GM12878 (cell line): ENCODE measurements at regions of chr12 and their contacts with region 1.

Region 1: GRCh38 chr12:49130151-49131050 is 794 bp downstream of the TUBA1B start:
- DNase-seq: peak; percentile 90
- ATAC-seq: peak; percentile 77
- H3K4me3 ChIP-seq: peak overlapping the region; percentile 100
- H3K27ac ChIP-seq: peak overlapping the region; percentile 98
- H3K4me1 ChIP-seq: peaks cover 13% of the 10 kb centered on the region
- H3K27me3 ChIP-seq: no peaks in the 10 kb centered on the region
- CTCF ChIP-seq: peak; percentile 95 to 96 (median 95)
- EP300 ChIP-seq: peak in 1 of 2 experiments; percentile 24; a peak in 1 of 4 replicates
- POLR2A ChIP-seq: peak; percentile 84
- RAD21 ChIP-seq: peak; percentile 37; the same call in 1 of the 2 replicates

Region 2: DNA sequence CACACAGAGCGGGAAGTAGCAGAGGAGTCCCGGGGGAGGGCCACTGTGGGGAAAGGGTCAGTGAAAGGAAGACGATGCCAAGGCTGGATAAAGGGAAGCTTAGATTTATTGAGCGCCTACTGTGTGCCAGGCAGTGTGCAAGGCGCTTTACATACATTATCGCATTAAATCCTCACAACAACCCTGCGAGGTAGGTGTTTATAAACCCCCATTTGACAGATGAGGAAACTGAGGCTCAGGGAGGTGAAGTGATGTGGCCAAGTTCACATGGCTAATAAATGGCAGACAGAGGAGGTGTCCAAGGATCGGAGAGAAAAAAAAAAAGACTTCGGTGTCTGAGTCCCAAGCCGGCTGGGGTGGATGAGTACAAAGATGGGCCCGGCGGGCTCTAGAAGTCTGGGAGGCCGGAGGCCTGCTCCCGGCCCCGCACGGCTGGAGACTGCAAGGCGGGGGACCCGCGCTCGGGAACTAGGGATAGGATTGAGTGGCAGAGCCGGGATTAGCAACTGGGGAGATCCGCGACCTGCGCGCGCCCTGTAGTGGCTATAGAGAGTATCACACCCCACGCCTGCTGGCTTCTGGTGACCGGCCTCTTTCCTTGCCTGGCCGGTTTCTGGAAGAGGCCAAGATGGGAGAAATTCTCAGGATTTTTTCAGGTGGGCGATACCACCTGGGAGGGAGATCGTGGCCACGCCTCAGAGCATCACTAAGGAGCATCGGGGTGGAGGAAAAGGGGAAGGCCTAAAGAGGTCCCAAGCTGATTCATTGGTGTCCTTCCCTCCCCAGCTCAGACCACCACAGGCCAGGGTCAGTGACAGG is 135.1 kb before region 1 on chr12:
- CTCF ChIA-PET with region 1: interaction called, 9 read pairs
- POLR2A ChIA-PET with region 1: no interaction called
- RAD21 ChIA-PET with region 1: interaction called, 19 read pairs
- SMC1A ChIA-PET with region 1: no interaction called
- in situ Hi-C with region 1: no loop called
- intact Hi-C with region 1: no loop called
- DNase-seq: no peak
- ATAC-seq: peak; percentile 31
- H3K4me3 ChIP-seq: no peak overlapping the region
- H3K27ac ChIP-seq: no peak overlapping the region
- H3K4me1 ChIP-seq: peaks cover 29% of the 10 kb centered on the region
- H3K27me3 ChIP-seq: no peaks in the 10 kb centered on the region; a peak in 1 of 4 replicates
- CTCF ChIP-seq: peak; percentile 68 to 84 (median 82)
- EP300 ChIP-seq: no peak
- POLR2A ChIP-seq: no peak
- RAD21 ChIP-seq: peak; percentile 62

Region 3: DNA sequence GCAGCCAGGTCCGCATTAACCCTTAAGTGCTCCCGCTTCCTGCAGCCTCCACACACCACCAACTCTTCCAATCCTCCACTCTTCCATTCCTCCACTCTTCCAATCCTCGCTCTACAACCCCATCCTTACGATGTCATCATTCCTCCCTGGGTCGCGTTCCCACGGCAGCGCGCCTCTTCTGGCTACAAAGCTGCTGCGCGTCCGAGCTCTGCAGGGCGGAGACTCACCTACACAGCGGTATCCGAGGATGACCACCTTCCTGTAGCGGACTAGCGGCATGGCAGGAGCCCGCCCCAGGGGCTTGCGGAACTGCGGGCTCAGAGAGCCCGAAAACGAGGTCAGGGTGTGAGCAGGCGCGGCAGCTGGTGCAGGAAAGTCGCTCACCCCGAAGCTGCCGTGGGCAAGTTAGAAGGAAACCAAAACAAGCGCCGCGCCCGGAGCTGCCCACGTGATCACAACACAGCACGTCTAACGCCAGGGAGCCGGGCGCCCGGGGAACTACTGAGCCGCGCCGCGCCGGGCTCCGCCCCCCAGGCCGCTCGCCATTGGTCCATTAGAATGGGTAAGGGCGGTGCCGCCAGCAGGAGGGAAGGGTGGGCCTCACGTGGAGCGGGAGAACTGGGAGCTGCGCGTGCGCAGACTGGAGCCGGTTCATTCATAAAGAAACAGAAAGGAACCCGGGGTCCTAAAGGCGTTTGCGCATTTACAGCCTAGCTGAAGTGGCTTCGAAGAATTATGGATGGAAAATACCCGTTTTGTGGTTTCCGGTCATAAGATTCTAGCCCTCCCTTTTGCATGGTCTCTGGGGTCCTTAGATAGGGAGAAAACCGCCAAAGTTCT is 60.7 kb before region 1 on chr12 and contains the start of gene RHEBL1:
- CTCF ChIA-PET with region 1: interaction called, 35 read pairs
- POLR2A ChIA-PET with region 1: interaction called, 26 read pairs
- RAD21 ChIA-PET with region 1: interaction called, 28 read pairs
- SMC1A ChIA-PET with region 1: interaction called, 12 read pairs
- in situ Hi-C with region 1: no loop called
- intact Hi-C with region 1: loop called (anchors 1 kb)
- DNase-seq: peak; percentile 94
- ATAC-seq: peak; percentile 99
- H3K4me3 ChIP-seq: peak within 1 kb of the TSS; percentile 93
- H3K27ac ChIP-seq: peak within 1 kb of the TSS; percentile 91
- H3K4me1 ChIP-seq: peaks cover 4% of the 10 kb centered on the region
- H3K27me3 ChIP-seq: no peaks in the 10 kb centered on the region
- CTCF ChIP-seq: peak; percentile 33 to 37 (median 36); a peak in 4 of 6 replicates
- EP300 ChIP-seq: peak in 1 of 2 experiments; percentile 30; a peak in 1 of 4 replicates
- POLR2A ChIP-seq: peak; percentile 79
- RAD21 ChIP-seq: no peak
- polyA plus RNA-seq, gene RHEBL1: 17.9 to 18.7 TPM

Region 4: GRCh38 chr12:49098035-49098451 is 32.4 kb before region 1 on chr12:
- CTCF ChIA-PET with region 1: interaction called, 48 read pairs
- POLR2A ChIA-PET with region 1: interaction called, 11 read pairs
- RAD21 ChIA-PET with region 1: interaction called, 3 read pairs
- SMC1A ChIA-PET with region 1: interaction called, 4 read pairs
- in situ Hi-C with region 1: no loop called
- intact Hi-C with region 1: no loop called
- DNase-seq: no peak
- ATAC-seq: peak; percentile 80
- H3K4me3 ChIP-seq: no peak overlapping the region
- H3K27ac ChIP-seq: no peak overlapping the region
- H3K4me1 ChIP-seq: no peaks in the 10 kb centered on the region
- H3K27me3 ChIP-seq: peaks cover 6 to 10% of the 10 kb centered on the region in 2 experiments
- CTCF ChIP-seq: peak; percentile 76 to 89 (median 84)
- EP300 ChIP-seq: no peak
- POLR2A ChIP-seq: no peak
- RAD21 ChIP-seq: peak; percentile 55

Region 5: DNA sequence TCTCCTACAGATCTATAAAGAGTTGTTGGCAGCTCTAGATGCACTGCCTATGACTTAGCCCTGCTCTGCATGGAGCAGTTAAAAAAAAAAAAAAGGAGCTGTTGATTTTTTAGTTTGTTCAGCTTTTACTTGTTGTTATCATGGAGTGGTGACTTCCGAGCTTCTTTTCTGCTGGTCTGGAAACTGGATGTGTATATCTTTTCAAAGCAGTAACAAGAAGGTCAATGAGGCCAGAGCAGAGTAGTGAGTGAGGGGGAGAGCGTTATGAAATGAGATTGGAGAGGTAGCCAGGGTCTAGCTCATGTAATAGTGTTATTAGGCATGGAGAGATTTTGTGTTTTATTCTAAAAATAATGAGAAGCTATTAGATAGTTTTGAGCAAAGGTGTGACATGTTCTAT is 14.0 kb after region 1 on chr12:
- CTCF ChIA-PET with region 1: interaction called, 5 read pairs
- POLR2A ChIA-PET with region 1: interaction called, 15 read pairs
- RAD21 ChIA-PET with region 1: interaction called, 4 read pairs
- SMC1A ChIA-PET with region 1: interaction called, 5 read pairs
- in situ Hi-C with region 1: no loop called
- intact Hi-C with region 1: no loop called
- DNase-seq: no peak
- ATAC-seq: no peak
- H3K4me3 ChIP-seq: no peak overlapping the region
- H3K27ac ChIP-seq: no peak overlapping the region
- H3K4me1 ChIP-seq: no peaks in the 10 kb centered on the region
- H3K27me3 ChIP-seq: no peaks in the 10 kb centered on the region
- CTCF ChIP-seq: no peak
- EP300 ChIP-seq: no peak
- POLR2A ChIP-seq: no peak
- RAD21 ChIP-seq: no peak

Region 6: DNA sequence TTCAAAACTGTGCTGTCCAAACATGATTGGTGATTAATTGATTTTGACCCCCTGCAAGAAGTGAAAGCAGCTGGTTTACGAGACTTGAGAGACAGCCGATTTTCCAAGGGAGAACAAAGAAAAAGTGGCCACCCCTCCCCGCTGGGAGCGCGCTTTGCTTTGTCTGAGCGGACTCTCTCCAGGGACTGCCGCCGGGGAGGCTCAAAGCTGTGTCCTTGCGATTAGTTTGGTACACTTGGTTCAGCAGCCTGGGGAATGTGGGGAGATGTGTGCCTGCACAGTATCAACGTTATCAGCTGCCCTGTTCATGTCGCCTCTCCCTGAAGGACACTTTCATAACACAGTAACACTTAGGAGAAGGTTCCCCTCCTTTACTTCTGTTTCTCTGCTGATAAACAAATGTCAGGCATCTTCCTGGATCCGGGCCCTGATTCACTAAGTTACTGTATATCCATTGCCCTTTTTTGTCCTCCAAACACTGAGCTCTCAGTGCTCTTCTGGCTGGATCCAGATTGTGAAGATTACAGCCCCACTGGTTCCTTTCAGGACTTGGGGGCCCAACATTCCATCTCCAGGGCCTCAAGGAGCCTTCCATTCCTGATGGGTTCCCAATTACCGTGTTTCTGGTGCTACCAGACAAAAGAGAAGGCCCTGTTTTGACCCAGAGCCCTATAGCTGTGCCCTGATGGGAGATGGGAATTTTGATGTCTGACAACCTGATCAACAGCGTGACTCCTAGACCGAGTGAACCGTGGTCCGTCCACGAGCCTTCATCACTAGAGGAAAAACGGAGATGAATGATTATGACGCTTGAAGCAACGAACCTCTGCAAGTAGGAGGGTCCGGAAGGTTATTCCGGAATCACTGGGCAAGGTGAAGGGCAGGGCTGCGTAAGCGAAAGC is 102.8 kb after region 1 on chr12:
- CTCF ChIA-PET with region 1: interaction called, 13 read pairs
- POLR2A ChIA-PET with region 1: interaction called, 17 read pairs
- RAD21 ChIA-PET with region 1: interaction called, 6 read pairs
- SMC1A ChIA-PET with region 1: no interaction called
- in situ Hi-C with region 1: no loop called
- intact Hi-C with region 1: loop called (anchors 2 kb)
- DNase-seq: no peak
- ATAC-seq: no peak
- H3K4me3 ChIP-seq: peak overlapping the region; percentile 4; the same call in 1 of the 2 replicates
- H3K27ac ChIP-seq: no peak overlapping the region
- H3K4me1 ChIP-seq: peaks cover 3% of the 10 kb centered on the region; the same call in 1 of the 2 replicates
- H3K27me3 ChIP-seq: no peaks in the 10 kb centered on the region
- CTCF ChIP-seq: no peak
- EP300 ChIP-seq: no peak
- POLR2A ChIP-seq: no peak
- RAD21 ChIP-seq: no peak